ENCODE measurements at regions of chr11 and their contacts with region 1.

Region 1: DNA sequence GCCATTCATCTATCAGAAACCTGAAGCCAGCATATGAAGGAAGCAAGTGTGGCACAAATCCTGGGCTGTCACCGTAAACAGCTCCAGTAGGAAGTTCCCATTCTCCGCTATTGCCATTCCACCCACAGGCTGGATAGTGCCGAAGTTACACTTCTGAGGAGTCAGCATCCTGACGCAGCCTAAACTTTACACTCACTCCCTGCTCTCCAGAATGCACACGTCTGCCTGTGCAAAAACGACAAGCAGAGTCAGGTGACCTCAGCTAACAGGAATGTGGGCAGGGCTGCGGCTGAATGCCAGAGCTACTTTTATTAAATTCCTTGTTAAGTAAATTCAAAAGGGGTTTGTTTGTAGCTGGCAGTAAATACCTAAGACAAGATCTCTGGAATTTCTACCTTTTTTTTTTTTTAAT is 33.7 kb downstream of the NFRKB start:
- DNase-seq: no peak

Region 2: GRCh38 chr11:128346804-128347203 is 1514.9 kb before region 1 on chr11:
- intact Hi-C with region 1: loop called in 1 of 2 experiments (anchors 5 kb)
- DNase-seq: no peak

Region 3: GRCh38 chr11:129750349-129751292 is 111.1 kb before region 1 on chr11:
- intact Hi-C with region 1: no loop called
- DNase-seq: peak; percentile 92

Region 4: DNA sequence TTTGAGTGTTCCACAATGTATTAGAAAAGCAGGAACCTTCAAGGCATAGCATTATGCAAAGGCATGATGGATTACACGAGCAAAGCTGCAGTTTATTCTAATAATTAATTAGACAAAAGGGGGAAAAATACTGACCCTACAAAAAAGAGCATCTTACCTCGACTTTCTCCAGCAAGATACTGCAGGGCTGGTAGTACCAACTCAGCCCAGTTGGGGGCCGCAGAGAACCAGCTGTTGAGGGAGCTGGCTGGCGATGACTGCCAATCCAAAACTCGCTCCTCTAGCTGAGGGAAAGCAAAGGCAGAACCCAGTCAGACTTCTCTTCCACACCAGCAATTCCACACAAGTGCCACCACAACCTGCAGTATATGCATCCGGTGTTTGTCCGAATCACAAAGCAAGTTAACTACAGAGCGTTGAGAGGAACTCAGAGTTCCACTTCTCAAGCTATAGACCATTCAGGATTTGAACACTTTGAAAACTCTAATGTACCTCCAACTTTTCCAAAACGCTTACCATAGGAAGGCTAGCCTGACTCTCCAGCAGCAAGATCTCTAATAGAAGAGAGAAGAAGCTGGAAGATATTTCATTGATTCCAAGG is 20.0 kb after region 1 on chr11:
- intact Hi-C with region 1: no loop called
- DNase-seq: no peak

Measured in posterior vena cava (tissue), 2 donors.